Caco-2 (cell line): ENCODE measurements at regions of chr3 and their contacts with region 1.

Region 1: DNA sequence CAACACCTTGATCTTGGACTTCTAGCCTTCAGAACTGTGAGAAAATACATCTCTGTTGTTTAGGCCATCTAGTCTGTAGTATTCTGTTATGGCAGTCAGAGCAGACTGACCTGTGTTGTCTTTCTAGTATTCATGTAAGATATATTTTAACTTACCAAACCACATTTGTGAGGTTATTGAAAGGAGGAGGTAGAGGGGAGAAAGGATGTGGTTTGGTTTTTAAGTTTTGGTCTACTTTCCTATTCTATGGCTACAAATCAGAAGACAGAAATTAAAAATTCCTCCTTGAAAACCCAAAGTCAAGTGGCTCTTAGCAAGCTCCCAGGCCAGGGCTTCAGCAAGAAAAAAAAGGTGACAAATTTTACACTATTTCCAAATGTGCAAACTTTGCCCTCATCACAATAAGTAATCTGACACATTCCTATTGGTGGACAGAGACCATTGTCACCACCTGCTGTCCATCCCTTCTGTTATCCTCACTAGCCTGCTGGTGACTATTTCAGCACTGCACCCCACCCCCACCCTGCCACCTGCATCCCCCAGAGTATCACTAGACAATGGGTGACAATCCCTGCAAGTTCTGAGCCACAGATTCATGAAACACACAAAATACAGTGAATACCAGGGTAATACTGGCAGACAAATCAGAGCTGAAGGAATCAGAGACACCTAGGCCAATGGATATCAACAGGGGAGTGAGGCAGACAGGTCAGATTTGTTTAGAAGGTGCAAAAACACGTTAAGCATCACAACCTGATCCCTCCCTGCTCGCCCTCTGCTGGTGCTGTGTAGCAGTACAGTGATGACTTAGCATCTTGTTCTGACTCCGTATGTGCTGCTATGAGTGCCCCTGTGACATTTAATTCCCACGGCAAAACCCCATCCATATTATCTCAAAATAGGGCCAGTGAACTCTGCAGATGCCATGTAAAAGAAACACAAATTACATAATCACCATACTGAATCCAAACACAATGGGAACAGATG is 79.0 kb upstream of the DCLK3 start:
- DNase-seq: peak; percentile 37 to 41
- H3K4me3 ChIP-seq: no peak overlapping the region
- H3K4me3 Mint-ChIP-seq: no peak overlapping the region
- H3K27ac Mint-ChIP-seq: no peak overlapping the region
- H3K4me1 ChIP-seq: no peaks in the 10 kb centered on the region
- H3K4me1 Mint-ChIP-seq: no peaks in the 10 kb centered on the region
- H3K27me3 ChIP-seq: no peaks in the 10 kb centered on the region
- H3K27me3 Mint-ChIP-seq: no peaks in the 10 kb centered on the region
- CTCF ChIP-seq: peak; percentile 57 to 61

Region 2: GRCh38 chr3:36729204-36730056 is 113.9 kb before region 1 on chr3:
- CTCF ChIA-PET with region 1: interaction called, 9 read pairs
- POLR2A ChIA-PET with region 1: no interaction called
- intact Hi-C with region 1: loop called (anchors 1 kb)
- DNase-seq: peak in 1 of 2 experiments; percentile 43
- H3K4me3 ChIP-seq: no peak overlapping the region
- H3K4me3 Mint-ChIP-seq: no peak overlapping the region
- H3K27ac Mint-ChIP-seq: no peak overlapping the region
- H3K4me1 ChIP-seq: peaks cover 16% of the 10 kb centered on the region; the same call in 1 of the 2 replicates
- H3K4me1 Mint-ChIP-seq: peaks cover 26% of the 10 kb centered on the region
- H3K27me3 ChIP-seq: no peaks in the 10 kb centered on the region
- H3K27me3 Mint-ChIP-seq: peaks cover 12% of the 10 kb centered on the region
- CTCF ChIP-seq: peak; percentile 61 to 65

Region 3: GRCh38 chr3:36792342-36792741 is 51.0 kb before region 1 on chr3:
- CTCF ChIA-PET with region 1: no interaction called
- POLR2A ChIA-PET with region 1: no interaction called
- intact Hi-C with region 1: loop called (anchors 1 kb)
- DNase-seq: peak in 1 of 2 experiments; percentile 60
- H3K4me3 ChIP-seq: no peak overlapping the region
- H3K4me3 Mint-ChIP-seq: no peak overlapping the region
- H3K27ac Mint-ChIP-seq: no peak overlapping the region
- H3K4me1 ChIP-seq: no peaks in the 10 kb centered on the region
- H3K4me1 Mint-ChIP-seq: no peaks in the 10 kb centered on the region
- H3K27me3 ChIP-seq: no peaks in the 10 kb centered on the region
- H3K27me3 Mint-ChIP-seq: peaks cover 23% of the 10 kb centered on the region
- CTCF ChIP-seq: peak; percentile 60 to 73

Region 4: GRCh38 chr3:36957862-36958686 is 114.7 kb after region 1 on chr3:
- CTCF ChIA-PET with region 1: no interaction called
- POLR2A ChIA-PET with region 1: no interaction called
- intact Hi-C with region 1: no loop called
- DNase-seq: no peak
- H3K4me3 ChIP-seq: peak overlapping the region; percentile 4; the same call in 1 of the 2 replicates
- H3K4me3 Mint-ChIP-seq: peak overlapping the region; percentile 70
- H3K27ac Mint-ChIP-seq: peak overlapping the region; percentile 91
- H3K4me1 ChIP-seq: peaks cover 25% of the 10 kb centered on the region
- H3K4me1 Mint-ChIP-seq: peaks cover 26% of the 10 kb centered on the region
- H3K27me3 ChIP-seq: no peaks in the 10 kb centered on the region
- H3K27me3 Mint-ChIP-seq: no peaks in the 10 kb centered on the region
- CTCF ChIP-seq: no peak